T-cell (primary cell): ENCODE measurements at regions of chr3 and their contacts with region 1.

Region 1: DNA sequence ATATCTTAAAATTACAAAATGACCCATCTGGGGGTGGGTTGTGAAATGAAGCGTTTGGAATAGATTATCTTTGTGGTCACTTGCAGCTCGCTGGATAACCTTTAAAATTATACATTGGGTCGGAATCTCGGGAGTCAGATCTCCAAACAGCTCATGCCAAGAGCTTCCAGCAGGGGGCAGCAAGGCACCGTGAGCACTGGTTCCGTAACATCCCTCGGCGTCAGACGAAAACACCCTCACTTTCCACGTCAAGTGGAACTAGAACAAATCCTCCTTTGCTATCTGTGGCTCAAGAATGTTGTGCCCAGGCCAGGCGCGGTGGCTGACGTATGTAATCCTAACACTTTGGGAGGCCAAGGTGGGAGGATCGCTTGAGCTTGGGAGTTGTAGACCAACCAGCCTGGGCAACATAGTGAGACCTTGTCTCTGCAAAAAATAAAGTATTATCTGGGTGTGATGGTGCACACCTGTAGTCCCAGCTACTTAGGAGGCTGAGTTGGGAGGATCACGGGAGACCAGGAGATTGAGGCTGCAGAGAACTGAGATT is 31.1 kb downstream of the UMPS start:
- DNase-seq: peak; percentile 38 to 87 (median 69)
- ATAC-seq: peak; percentile 75 to 85 (median 82)
- H3K4me3 ChIP-seq: peak overlapping the region; percentile 10 to 19
- H3K4me3 Mint-ChIP-seq: peak overlapping the region; percentile 34 to 53 (median 49)
- H3K27ac ChIP-seq: no peak overlapping the region
- H3K27ac Mint-ChIP-seq: no peak overlapping the region
- H3K4me1 ChIP-seq: peaks cover 0 to 7% of the 10 kb centered on the region in 2 experiments
- H3K4me1 Mint-ChIP-seq: peaks cover 4 to 7% (median 6%) of the 10 kb centered on the region in 3 donors
- H3K27me3 ChIP-seq: peaks cover 0 to 16% of the 10 kb centered on the region in 2 experiments
- H3K27me3 Mint-ChIP-seq: peaks cover 0 to 2% of the 10 kb centered on the region in 2 donors

Region 2: GRCh38 chr3:124360563-124360962 is 400.8 kb before region 1 on chr3:
- CTCF ChIA-PET with region 1: interaction called in 1 of 2 experiments, 10 read pairs
- POLR2A ChIA-PET with region 1: no interaction called
- DNase-seq: no peak
- ATAC-seq: no peak
- H3K4me3 ChIP-seq: no peak overlapping the region
- H3K4me3 Mint-ChIP-seq: no peak overlapping the region
- H3K27ac ChIP-seq: no peak overlapping the region
- H3K27ac Mint-ChIP-seq: no peak overlapping the region
- H3K4me1 ChIP-seq: no peaks in the 10 kb centered on the region
- H3K4me1 Mint-ChIP-seq: no peaks in the 10 kb centered on the region
- H3K27me3 ChIP-seq: peaks cover 0 to 9% of the 10 kb centered on the region in 2 experiments
- H3K27me3 Mint-ChIP-seq: peaks cover 17 to 25% of the 10 kb centered on the region in 2 donors

Region 3: DNA sequence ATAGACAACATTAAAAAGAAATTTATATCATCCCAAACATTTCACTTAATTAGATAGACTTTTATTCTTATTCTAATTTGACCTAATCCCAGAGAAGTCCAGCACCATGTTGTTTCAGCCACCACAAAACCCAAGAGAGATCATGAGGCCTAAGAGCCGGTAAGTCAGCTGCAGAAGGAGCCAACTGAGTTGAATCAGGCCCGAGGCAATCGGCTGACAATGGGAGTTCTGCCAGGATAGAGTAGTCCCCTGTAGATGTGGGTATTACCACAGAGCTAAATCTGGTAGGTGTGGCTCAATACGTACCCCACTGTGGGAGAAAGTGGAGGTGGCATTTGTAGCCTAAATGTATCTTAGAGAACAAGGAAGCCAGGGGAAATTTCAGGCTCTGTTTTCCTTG is 80.8 kb before region 1 on chr3:
- CTCF ChIA-PET with region 1: no interaction called
- POLR2A ChIA-PET with region 1: no interaction called
- DNase-seq: no peak
- ATAC-seq: no peak
- H3K4me3 ChIP-seq: no peak overlapping the region
- H3K4me3 Mint-ChIP-seq: no peak overlapping the region
- H3K27ac ChIP-seq: no peak overlapping the region
- H3K27ac Mint-ChIP-seq: no peak overlapping the region
- H3K4me1 ChIP-seq: no peaks in the 10 kb centered on the region
- H3K4me1 Mint-ChIP-seq: no peaks in the 10 kb centered on the region
- H3K27me3 ChIP-seq: peaks cover 0 to 7% of the 10 kb centered on the region in 2 experiments
- H3K27me3 Mint-ChIP-seq: peaks cover 4 to 10% of the 10 kb centered on the region in 2 donors

Region 4: GRCh38 chr3:124905849-124906248 is 144.5 kb after region 1 on chr3:
- CTCF ChIA-PET with region 1: interaction called, 15 to 89 read pairs
- POLR2A ChIA-PET with region 1: no interaction called
- DNase-seq: no peak
- ATAC-seq: no peak
- H3K4me3 ChIP-seq: no peak overlapping the region
- H3K4me3 Mint-ChIP-seq: no peak overlapping the region
- H3K27ac ChIP-seq: no peak overlapping the region
- H3K27ac Mint-ChIP-seq: no peak overlapping the region
- H3K4me1 ChIP-seq: peaks cover 0 to 9% of the 10 kb centered on the region in 2 experiments
- H3K4me1 Mint-ChIP-seq: peaks cover 1 to 6% (median 2%) of the 10 kb centered on the region in 3 donors
- H3K27me3 ChIP-seq: peaks cover 0 to 17% of the 10 kb centered on the region in 2 experiments
- H3K27me3 Mint-ChIP-seq: peaks cover 12 to 24% of the 10 kb centered on the region in 2 donors